Transverse colon (tissue), 4 donors: ENCODE measurements at regions of chrX and their contacts with region 1.

Region 1: DNA sequence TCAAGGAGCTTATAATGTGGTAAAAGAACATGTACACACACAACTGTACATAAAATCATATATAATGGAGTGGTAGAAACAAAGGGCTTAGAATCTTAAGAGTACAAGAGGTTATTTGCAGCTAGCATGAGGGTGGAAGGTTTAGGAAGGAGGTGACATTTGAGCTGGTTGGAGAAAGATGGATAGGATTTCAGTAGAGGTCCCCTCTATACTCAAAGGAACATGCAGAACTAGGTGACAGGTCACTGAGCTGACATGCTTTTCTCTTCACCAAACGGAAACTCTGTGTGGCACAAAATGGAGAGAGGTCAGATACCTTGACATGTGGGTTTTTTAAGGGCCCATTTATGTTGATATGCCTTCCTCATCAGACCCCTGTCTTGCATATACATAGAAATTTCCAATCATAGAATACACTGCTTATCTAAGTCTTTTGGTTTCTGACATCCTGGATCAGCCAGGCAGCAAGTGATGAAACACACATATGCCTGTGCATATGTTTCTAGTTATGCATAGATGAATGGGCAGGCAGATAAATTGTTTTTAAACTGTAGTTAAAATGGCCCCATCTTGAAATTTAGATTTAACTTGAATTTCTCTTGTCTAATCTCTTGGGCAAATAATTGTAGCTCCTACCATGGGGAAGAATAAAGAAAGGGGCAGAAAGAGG is 29.3 kb downstream of the CLCN5 start:
- DNase-seq: no peak
- H3K4me3 ChIP-seq: no peak overlapping the region
- H3K27ac ChIP-seq: no peak overlapping the region
- H3K4me1 ChIP-seq: no peaks in the 10 kb centered on the region
- H3K27me3 ChIP-seq: no peaks in the 10 kb centered on the region
- CTCF ChIP-seq: no peak
- EP300 ChIP-seq: no peak
- POLR2A ChIP-seq: no peak

Region 2: DNA sequence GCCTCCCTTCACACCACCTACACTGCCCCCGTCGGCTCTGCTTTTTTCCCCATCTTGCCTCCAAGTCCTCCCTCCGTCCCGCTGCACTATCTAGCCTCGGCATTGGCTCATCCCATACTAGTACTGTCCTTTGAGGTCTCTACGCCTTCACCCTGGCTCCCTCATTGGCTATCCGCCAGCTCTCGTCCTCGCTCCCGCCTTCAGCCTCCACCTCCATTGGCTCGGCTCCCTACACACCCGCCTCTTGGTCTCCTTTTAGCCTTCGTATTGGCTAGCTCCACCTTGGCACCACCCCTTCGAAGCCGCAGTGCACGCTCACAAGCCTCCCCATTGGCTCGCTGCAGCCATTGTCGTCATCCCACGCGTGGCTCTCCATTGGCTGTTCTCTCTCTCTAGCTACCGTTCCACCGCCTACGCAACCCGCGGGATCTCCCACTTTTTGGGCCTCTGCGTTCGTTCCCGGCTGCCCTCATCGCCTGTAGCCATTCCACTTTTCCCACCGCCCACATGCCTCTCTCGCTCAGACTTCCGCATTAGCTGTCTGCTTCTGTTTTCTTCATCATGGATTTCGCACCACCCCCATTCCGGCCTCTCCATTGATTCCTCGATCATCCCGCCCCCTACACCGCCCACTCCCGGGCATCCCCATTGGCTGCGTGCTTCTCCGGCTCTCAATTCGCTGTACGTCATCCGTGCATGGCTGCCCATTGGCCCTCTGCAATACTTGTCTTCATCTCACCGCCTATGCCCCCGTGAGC is 682.5 kb before region 1 on chrX:
- in situ Hi-C with region 1: no loop called
- intact Hi-C with region 1: no loop called
- DNase-seq: peak; percentile 96
- H3K4me3 ChIP-seq: peak overlapping the region; percentile 40 to 90 (median 78)
- H3K27ac ChIP-seq: peak overlapping the region; percentile 86 to 95 (median 94)
- H3K4me1 ChIP-seq: peaks cover 4 to 28% (median 17%) of the 10 kb centered on the region in 4 donors
- H3K27me3 ChIP-seq: no peaks in the 10 kb centered on the region
- CTCF ChIP-seq: no peak
- EP300 ChIP-seq: no peak
- POLR2A ChIP-seq: peak; percentile 62

Region 3: GRCh38 chrX:50003467-50003866 is 51.8 kb after region 1 on chrX:
- in situ Hi-C with region 1: no loop called
- intact Hi-C with region 1: loop called (anchors 2 kb)
- DNase-seq: no peak
- H3K4me3 ChIP-seq: no peak overlapping the region
- H3K27ac ChIP-seq: no peak overlapping the region
- H3K4me1 ChIP-seq: no peaks in the 10 kb centered on the region
- H3K27me3 ChIP-seq: no peaks in the 10 kb centered on the region
- CTCF ChIP-seq: no peak
- EP300 ChIP-seq: no peak
- POLR2A ChIP-seq: no peak